Pancreas (tissue), 10 donors: ENCODE measurements at regions of chr7 and their contacts with region 1.

Region 1: GRCh38 chr7:140517546-140518369 is 38.5 kb upstream of the MKRN1 start:
- DNase-seq: peak; percentile 74 to 94 (median 85)
- ATAC-seq: peak; percentile 91 to 100 (median 98)
- H3K4me3 ChIP-seq: no peak overlapping the region
- H3K27ac ChIP-seq: no peak overlapping the region
- H3K4me1 ChIP-seq: no peaks in the 10 kb centered on the region
- H3K27me3 ChIP-seq: no peaks in the 10 kb centered on the region
- CTCF ChIP-seq: peak; percentile 64 to 78 (median 70)

Region 2: DNA sequence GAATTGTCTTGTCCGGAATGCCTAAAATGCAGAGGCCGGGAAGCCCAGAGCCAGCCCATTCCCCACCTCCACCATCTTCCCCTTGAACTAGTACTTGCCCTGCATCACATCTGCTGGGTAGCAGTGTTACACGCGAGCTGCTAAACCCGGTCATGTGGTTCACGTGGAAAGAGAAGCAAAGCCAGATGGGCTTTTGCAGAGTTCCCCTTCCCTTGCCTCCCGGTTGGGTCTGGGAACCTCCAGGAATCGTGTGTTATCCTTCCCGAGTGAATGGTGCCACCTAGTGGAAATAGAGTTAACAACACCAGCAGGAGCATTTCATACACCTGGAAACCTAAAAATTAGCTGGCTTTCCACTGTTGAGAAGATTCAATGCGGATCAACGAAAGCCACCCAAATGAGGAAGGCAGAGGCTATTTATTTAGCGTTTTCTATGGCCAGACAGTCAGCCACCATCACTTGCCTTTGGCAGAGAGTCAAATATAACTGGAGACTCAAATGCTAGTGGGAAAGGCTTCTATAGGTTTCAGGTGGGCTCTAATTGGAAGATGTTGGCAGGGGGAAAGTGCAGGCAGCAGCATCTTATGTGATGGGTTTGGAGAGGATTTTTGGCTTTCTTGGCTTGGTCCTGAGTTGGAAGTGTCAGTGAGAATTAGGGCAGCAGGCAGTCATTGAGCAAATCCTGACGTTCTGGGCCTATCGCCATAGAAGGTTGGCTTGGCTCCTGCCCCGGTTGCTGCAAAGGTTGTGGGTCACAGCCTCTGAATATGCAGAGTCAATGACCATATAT is 135.8 kb after region 1 on chr7:
- intact Hi-C with region 1: loop called in 2 of 3 experiments (anchors 5 kb)
- DNase-seq: peak in 5 of 6 donors; percentile 44 to 70 (median 54)
- ATAC-seq: peak; percentile 71 to 83 (median 82)
- H3K4me3 ChIP-seq: no peak overlapping the region
- H3K27ac ChIP-seq: no peak overlapping the region
- H3K4me1 ChIP-seq: peaks cover 0 to 16% (median 5%) of the 10 kb centered on the region in 3 donors
- H3K27me3 ChIP-seq: no peaks in the 10 kb centered on the region
- CTCF ChIP-seq: peak; percentile 55 to 82 (median 78)